Esophagus muscularis mucosa (tissue), 4 donors: ENCODE measurements at regions of chr1 and their contacts with region 1.

Region 1: DNA sequence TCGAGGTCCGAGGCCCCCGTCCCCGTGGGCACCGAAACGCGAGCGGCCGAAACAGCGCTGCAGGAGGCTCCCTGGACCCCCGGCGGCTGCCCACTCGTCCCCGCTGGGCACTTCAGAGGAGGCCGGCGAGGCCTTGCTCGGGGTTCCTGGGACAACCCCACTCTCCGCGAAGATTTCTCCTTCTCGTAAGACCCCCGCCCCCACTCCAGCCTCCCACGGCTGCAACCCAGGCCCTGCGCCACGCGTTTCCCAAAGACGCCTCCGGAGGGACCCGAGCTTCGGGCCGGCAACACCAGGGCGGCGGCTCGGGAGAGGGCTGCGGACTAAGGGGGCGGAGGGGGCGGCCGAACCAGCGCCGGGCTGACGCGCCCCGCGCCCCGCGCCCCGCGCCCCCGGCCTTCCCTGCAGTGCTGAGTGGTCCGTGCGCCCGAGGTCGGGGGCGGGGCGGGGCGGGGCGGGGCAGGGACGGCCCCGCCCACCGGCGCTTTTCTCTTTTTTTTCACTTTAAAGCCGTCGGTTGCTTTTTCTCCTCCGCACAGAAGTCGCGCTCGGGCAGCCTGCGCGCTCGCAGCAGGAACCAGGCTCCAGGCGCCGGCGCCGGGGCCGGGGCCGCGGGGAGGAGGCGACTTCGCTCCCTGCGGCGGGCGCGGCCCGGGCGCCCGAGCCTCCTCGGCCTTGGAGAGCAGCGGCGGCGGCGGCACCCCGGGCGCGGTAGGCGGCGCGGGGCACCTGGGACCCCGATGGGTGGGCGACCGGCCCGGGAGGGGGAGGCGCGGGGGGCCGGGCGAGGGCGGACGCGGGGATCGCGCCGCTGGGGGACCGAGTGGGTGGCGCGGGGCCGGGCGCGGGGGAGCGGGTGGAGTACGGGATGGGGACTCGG is at the start of gene SPSB1:
- DNase-seq: no peak
- H3K4me3 ChIP-seq: peak within 1 kb of the TSS; percentile 76 to 98 (median 96)
- H3K27ac ChIP-seq: peak within 1 kb of the TSS; percentile 93 to 99 (median 98)
- H3K4me1 ChIP-seq: peaks cover 40 to 65% (median 64%) of the 10 kb centered on the region in 4 donors
- H3K27me3 ChIP-seq: no peaks in the 10 kb centered on the region
- CTCF ChIP-seq: peak in 1 of 3 experiments; percentile 24
- EP300 ChIP-seq: no peak
- POLR2A ChIP-seq: peak; percentile 46
- total RNA-seq, gene SPSB1: 61.0 to 104 (median 97.4) TPM

Region 2: GRCh38 chr1:9058465-9058864 is 234.1 kb before region 1 on chr1:
- intact Hi-C with region 1: no loop called
- DNase-seq: no peak
- H3K4me3 ChIP-seq: no peak overlapping the region
- H3K27ac ChIP-seq: no peak overlapping the region
- H3K4me1 ChIP-seq: peaks cover 0 to 22% (median 15%) of the 10 kb centered on the region in 4 donors
- H3K27me3 ChIP-seq: no peaks in the 10 kb centered on the region
- CTCF ChIP-seq: peak; percentile 42 to 55 (median 48)
- EP300 ChIP-seq: no peak
- POLR2A ChIP-seq: no peak

Region 3: GRCh38 chr1:9338397-9339246 is 46.0 kb after region 1 on chr1:
- intact Hi-C with region 1: no loop called
- DNase-seq: no peak
- H3K4me3 ChIP-seq: peak overlapping the region; percentile 23 to 34 (median 26)
- H3K27ac ChIP-seq: peak overlapping the region; percentile 83 to 89 (median 86)
- H3K4me1 ChIP-seq: peaks cover 33 to 91% (median 84%) of the 10 kb centered on the region in 4 donors
- H3K27me3 ChIP-seq: no peaks in the 10 kb centered on the region
- CTCF ChIP-seq: peak in 2 of 3 experiments; percentile 4 to 12
- EP300 ChIP-seq: no peak
- POLR2A ChIP-seq: no peak

Region 4: DNA sequence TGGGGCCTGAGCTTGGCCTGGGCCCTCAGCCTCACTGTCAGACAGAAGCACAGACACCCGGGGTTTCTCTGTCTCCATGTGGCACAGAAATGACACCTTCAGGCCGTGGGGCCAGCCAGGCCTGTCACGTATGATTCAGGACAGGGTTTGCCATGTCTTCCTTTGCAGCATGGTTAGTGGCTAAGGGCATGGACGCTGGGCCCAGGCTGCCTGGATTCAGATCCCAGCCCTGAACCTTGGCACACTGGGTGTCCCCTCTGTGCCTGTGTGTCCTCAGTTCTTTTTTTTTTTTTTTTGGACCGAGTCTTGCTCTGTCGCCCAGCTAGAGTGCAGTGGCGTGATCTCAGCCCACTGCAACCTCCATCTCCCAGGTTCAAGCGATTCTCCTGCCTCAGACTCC is 73.7 kb after region 1 on chr1:
- intact Hi-C with region 1: no loop called
- DNase-seq: no peak
- H3K4me3 ChIP-seq: no peak overlapping the region
- H3K27ac ChIP-seq: peak overlapping the region; percentile 75 to 95 (median 93)
- H3K4me1 ChIP-seq: peaks cover 30 to 99% (median 90%) of the 10 kb centered on the region in 4 donors
- H3K27me3 ChIP-seq: no peaks in the 10 kb centered on the region
- CTCF ChIP-seq: no peak
- EP300 ChIP-seq: no peak
- POLR2A ChIP-seq: no peak

Region 5: GRCh38 chr1:9376886-9377333 is 84.3 kb after region 1 on chr1:
- intact Hi-C with region 1: loop called (anchors 2 kb)
- DNase-seq: peak; percentile 96
- H3K4me3 ChIP-seq: peak overlapping the region in 2 of 4 donors; percentile 8 to 28
- H3K27ac ChIP-seq: peak overlapping the region; percentile 91 to 95 (median 95)
- H3K4me1 ChIP-seq: peaks cover 40 to 75% (median 74%) of the 10 kb centered on the region in 4 donors
- H3K27me3 ChIP-seq: no peaks in the 10 kb centered on the region
- CTCF ChIP-seq: peak in 1 of 3 experiments; percentile 14
- EP300 ChIP-seq: peak; percentile 99
- POLR2A ChIP-seq: no peak

Region 6: GRCh38 chr1:9455487-9456234 is 163.1 kb after region 1 on chr1:
- intact Hi-C with region 1: loop called (anchors 2 kb)
- DNase-seq: no peak
- H3K4me3 ChIP-seq: no peak overlapping the region
- H3K27ac ChIP-seq: peak overlapping the region in 1 of 4 donors; percentile 7
- H3K4me1 ChIP-seq: peaks cover 3 to 34% (median 30%) of the 10 kb centered on the region in 4 donors
- H3K27me3 ChIP-seq: no peaks in the 10 kb centered on the region
- CTCF ChIP-seq: peak; percentile 78 to 85 (median 80)
- EP300 ChIP-seq: no peak
- POLR2A ChIP-seq: no peak

Region 7: GRCh38 chr1:9473032-9473792 is 180.6 kb after region 1 on chr1:
- intact Hi-C with region 1: loop called (anchors 5 kb)
- DNase-seq: no peak
- H3K4me3 ChIP-seq: no peak overlapping the region
- H3K27ac ChIP-seq: peak overlapping the region; percentile 48 to 79 (median 64)
- H3K4me1 ChIP-seq: peaks cover 0 to 26% (median 20%) of the 10 kb centered on the region in 4 donors
- H3K27me3 ChIP-seq: no peaks in the 10 kb centered on the region
- CTCF ChIP-seq: no peak
- EP300 ChIP-seq: no peak
- POLR2A ChIP-seq: no peak

Region 8: DNA sequence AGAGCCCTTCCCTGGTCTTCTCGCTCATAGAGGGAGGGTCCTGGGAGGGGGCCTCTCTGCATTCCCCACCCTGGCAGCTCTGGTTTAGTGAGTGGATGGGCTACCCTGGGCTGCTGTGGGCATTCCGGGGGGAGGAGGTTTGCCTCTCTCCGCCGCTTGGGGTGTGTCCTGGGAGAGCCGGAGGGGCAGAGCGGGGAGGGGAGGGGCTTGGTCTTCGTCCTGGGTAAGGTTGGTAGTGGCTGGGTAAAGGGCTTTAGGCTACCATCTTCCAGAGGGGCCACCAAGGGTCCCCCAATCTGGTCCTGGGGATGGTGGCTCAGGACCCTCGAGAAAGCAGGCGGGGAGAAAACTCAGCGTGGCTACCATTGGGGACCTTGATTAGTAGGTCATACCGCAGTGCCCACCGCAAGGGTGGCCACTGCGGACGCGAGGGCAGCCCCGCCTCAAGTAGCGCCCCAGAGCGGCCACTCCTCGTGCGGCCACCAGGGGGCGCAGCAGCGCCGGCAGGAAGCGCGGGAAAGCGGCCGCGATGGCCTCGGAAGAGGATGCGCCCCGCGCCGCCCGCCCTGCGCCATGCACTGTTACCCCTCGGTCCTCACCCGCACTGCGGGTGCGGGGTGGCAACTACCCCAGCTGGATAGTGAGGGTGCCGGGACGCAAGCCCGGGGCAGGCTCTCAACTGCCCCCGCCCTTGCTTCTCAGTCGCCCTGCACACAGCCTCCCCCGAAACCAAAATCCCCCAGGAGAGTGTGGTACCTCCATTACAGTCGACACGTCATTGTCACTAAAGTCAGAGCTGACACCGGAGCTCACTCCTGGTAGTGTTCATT is 202.5 kb after region 1 on chr1:
- intact Hi-C with region 1: loop called (anchors 1 kb)
- DNase-seq: no peak
- H3K4me3 ChIP-seq: peak overlapping the region; percentile 40 to 55 (median 44)
- H3K27ac ChIP-seq: no peak overlapping the region
- H3K4me1 ChIP-seq: peaks cover 6 to 14% (median 9%) of the 10 kb centered on the region in 4 donors
- H3K27me3 ChIP-seq: no peaks in the 10 kb centered on the region
- CTCF ChIP-seq: peak; percentile 95 to 99 (median 99)
- EP300 ChIP-seq: no peak
- POLR2A ChIP-seq: no peak

Region 9: DNA sequence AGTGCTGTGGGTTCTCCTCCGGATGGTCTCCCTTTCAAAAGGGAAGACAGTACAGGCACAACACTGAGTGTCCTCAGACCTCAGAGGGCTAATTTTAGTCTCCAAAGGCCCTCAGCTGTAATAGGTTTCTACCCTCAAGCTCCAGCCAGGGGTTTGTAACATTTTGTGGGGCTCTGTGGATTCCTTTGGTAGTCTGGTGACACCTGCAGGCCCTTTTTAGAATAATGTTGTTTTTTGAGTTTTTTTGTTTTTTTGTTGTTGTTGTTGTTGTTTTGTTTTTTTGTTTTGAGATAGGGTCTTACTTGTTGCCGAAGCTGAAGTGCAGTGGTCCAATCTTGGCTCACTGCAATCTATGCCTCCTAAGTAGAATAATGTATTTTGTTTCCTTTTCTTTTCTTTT is 281.1 kb after region 1 on chr1:
- intact Hi-C with region 1: loop called (anchors 5 kb)
- DNase-seq: no peak
- H3K4me3 ChIP-seq: no peak overlapping the region
- H3K27ac ChIP-seq: no peak overlapping the region
- H3K4me1 ChIP-seq: peaks cover 0 to 3% (median 0%) of the 10 kb centered on the region in 4 donors
- H3K27me3 ChIP-seq: no peaks in the 10 kb centered on the region
- CTCF ChIP-seq: peak; percentile 29 to 40 (median 36)
- EP300 ChIP-seq: no peak
- POLR2A ChIP-seq: no peak